Heart left ventricle (tissue), 16 donors: ENCODE measurements at regions of chr9 and their contacts with region 1.

Region 1: DNA sequence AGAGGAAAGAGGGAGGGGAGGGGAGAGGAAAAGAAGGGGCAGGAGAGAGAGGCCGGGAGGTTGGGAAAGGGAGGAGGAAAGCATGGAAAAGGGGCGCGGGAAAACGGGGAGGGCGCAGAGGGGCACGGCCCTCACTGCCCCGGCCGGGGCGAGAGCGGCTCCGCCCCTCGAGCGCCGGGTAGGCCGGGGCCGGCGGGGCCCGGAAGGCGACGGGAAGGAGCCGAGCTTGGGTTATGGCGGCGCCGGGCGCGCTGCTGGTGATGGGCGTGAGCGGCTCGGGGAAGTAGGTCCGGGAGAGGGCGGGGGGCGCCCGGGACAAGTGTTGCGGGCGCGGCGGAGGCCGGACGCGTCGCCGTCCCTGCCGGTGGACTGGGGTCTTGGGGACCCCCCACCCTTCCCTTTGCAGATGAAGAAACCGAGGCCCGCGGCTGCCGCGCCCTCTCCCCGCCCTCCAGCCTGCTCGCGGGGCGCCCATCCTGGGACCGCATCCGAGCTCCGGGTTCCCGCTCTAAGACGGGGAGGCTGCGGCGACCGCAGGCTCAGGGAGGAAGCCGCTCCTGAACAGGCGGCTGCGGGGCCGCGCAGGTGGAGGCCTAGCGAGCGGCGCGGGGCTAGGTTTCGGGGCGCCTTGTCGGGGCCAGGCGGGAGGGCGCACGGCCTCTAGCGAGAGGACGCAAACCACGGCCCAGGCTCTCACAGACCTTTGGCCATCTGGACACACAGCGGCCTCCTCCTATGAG is at the start of gene IDNK:
- DNase-seq: peak; percentile 68 to 82 (median 72)
- ATAC-seq: peak; percentile 63 to 95 (median 91)
- H3K4me3 ChIP-seq: peak within 1 kb of the TSS; percentile 53 to 98 (median 84)
- H3K27ac ChIP-seq: peak within 1 kb of the TSS; percentile 75 to 95 (median 90)
- H3K4me1 ChIP-seq: peaks cover 0 to 17% (median 7%) of the 10 kb centered on the region in 12 donors
- H3K27me3 ChIP-seq: peaks cover 0 to 4% (median 0%) of the 10 kb centered on the region in 9 donors
- CTCF ChIP-seq: no peak
- POLR2A ChIP-seq: peak in 1 of 2 donors; percentile 45
- total RNA-seq, gene IDNK: 0.69 to 6.9 (median 5.0) TPM

Region 2: GRCh38 chr9:83403527-83404238 is 219.4 kb before region 1 on chr9:
- intact Hi-C with region 1: no loop called
- DNase-seq: no peak
- ATAC-seq: peak in 3 of 4 donors; percentile 20 to 38 (median 36)
- H3K4me3 ChIP-seq: no peak overlapping the region
- H3K27ac ChIP-seq: no peak overlapping the region
- H3K4me1 ChIP-seq: peaks cover 0 to 17% (median 4%) of the 10 kb centered on the region in 12 donors
- H3K27me3 ChIP-seq: no peaks in the 10 kb centered on the region
- CTCF ChIP-seq: no peak
- POLR2A ChIP-seq: no peak

Region 3: DNA sequence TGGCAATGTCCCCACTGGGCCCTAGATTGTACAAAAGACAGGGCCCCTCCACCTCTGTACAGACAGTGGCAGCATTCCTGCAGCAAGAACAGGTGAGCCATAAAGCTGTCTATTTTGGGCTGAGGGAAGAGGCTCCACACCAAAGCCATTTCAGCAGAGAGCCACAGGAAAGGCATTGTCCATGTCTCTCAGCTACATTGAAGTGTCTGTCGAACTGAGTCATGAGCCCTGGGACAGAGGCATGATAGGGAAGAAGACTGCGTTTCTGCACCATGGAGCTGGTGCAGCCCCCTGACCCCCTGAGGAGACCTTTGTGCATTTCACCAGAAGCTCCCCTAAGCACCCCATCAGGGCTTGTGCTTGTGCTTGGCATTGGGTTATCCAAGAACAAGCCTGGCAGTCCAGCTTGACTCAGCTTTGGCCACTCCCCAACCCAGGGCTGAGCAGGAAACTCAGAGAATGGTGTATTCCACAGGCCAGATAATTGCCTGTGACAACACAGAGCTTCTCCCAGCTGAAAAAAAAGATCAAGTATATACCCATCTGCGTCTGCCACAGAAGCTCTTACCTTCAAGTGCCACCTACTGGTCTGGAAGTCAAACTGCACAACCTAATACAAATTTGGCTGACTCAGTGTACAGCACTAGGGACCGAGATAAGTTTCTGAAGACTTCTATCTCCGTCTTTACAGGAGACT is 79.0 kb before region 1 on chr9:
- intact Hi-C with region 1: no loop called
- DNase-seq: peak in 3 of 5 donors; percentile 35 to 50 (median 43)
- ATAC-seq: peak; percentile 73 to 92 (median 92)
- H3K4me3 ChIP-seq: no peak overlapping the region
- H3K27ac ChIP-seq: peak overlapping the region in 1 of 12 donors; percentile 21
- H3K4me1 ChIP-seq: peaks cover 0 to 12% (median 3%) of the 10 kb centered on the region in 12 donors
- H3K27me3 ChIP-seq: no peaks in the 10 kb centered on the region
- CTCF ChIP-seq: peak; percentile 64 to 86 (median 77)
- POLR2A ChIP-seq: no peak

Region 4: DNA sequence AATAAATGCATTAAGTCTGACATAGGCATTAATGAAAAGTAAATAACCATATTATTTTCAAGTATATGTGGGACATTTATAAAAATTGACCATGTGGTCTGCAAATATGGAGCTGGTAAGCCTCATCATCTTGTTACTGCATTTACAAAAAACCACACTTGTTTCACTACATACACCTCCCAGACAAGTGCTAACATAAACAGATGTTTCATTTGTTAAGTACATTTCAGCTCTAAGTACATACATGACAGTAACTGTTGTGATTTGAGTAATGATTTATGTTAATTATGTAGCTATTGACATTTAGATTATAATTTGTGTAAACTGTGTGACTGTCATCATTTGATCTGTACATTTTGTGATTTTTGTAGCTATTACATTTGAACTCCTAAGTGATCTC is 13.7 kb after region 1 on chr9:
- intact Hi-C with region 1: no loop called
- DNase-seq: no peak
- ATAC-seq: no peak
- H3K4me3 ChIP-seq: no peak overlapping the region
- H3K27ac ChIP-seq: no peak overlapping the region
- H3K4me1 ChIP-seq: peaks cover 0 to 4% (median 0%) of the 10 kb centered on the region in 12 donors
- H3K27me3 ChIP-seq: no peaks in the 10 kb centered on the region
- CTCF ChIP-seq: no peak
- POLR2A ChIP-seq: no peak

Region 5: DNA sequence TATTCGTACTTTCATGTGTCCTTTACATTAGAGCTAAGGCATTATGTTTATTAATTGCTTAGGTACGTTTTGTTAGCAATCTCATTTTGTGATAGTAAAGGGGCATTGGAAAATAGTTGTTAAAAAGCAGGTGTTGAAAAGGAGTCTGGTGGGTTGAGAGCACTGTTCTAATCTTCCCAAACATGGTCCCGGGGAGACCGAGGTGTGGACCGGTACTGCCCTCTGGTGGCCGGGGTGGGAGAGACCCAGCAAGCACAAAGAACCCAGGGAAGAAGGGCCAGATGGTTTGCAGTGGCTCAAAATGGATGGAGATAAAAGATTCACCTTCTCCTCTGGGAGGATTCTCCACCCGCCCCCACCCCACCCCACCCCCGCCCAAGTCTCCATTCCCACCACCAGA is 26.0 kb after region 1 on chr9:
- intact Hi-C with region 1: loop called in 2 of 10 experiments (anchors 1 to 2 kb)
- DNase-seq: peak; percentile 60 to 83 (median 61)
- ATAC-seq: peak; percentile 58 to 81 (median 76)
- H3K4me3 ChIP-seq: no peak overlapping the region
- H3K27ac ChIP-seq: peak overlapping the region in 2 of 12 donors; percentile 15 to 34
- H3K4me1 ChIP-seq: peaks cover 0 to 15% (median 1%) of the 10 kb centered on the region in 12 donors
- H3K27me3 ChIP-seq: no peaks in the 10 kb centered on the region
- CTCF ChIP-seq: peak; percentile 60 to 77 (median 71)
- POLR2A ChIP-seq: no peak

Region 6: DNA sequence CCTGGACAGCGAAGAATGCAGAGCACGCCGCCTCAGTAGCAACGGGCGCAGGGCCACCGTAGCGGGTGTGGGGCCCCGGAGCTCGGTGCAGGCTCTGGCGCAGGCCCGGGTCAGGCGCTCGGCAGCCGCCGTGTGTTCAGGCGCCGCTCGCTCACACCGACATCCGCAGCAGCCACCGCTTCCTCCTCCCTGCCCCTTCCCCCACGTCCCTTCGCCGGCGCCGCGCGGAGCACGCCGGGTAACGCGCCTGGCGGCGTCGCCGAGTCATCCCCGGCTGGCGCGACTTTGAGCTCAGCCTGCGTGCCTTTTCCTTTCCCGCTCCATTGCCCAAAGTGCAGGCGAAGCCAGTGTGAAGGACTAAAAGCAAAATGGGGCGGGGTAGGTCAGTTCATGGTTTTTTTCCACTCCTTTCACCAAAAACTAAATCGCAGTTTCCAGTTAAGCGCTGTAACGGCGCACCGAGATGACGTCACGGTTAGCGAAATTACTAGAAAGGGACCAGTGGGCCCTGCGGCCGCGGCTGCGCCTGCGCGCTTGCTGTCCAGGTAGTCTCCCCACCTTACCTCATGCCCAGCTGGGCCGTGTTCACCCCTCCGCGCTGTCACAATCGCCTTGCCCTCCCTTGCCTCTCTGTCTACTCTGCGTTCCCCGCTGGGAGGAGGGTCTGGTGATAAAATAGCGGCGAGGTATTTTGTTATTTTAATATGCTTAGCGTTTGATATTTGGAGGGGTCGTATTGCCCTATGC is 84.8 kb after region 1 on chr9 and contains the start of gene UBQLN1:
- intact Hi-C with region 1: loop called in 6 of 10 experiments (anchors 2 to 10 kb)
- DNase-seq: peak; percentile 95 to 97 (median 96)
- ATAC-seq: peak; percentile 96 to 98 (median 96)
- H3K4me3 ChIP-seq: peak within 1 kb of the TSS; percentile 64 to 99 (median 86)
- H3K27ac ChIP-seq: peak within 1 kb of the TSS; percentile 92 to 100 (median 98)
- H3K4me1 ChIP-seq: peaks cover 0 to 48% (median 25%) of the 10 kb centered on the region in 12 donors
- H3K27me3 ChIP-seq: no peaks in the 10 kb centered on the region
- CTCF ChIP-seq: peak in 1 of 12 donors; percentile 3
- POLR2A ChIP-seq: peak; percentile 43 to 86
- total RNA-seq, gene UBQLN1: 88.9 to 144 (median 103) TPM

Region 7: DNA sequence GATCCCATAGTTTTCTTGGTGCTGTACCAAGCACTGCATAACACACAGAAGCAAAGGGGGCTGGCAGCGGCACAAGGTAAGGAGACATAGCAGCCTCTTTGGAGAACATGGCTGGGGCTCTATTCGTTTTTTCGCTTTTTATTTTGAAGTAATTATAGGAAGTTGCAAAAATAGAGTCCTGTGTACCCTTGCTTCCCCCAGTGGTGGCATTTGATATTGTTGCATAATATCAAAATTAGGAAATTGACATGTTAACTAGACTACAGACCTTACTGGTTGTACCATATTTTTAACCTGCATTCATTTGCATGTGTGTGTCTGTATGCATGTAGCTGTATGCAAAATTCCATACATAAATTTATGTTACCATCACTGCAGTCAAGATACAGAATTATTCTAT is 91.2 kb after region 1 on chr9:
- intact Hi-C with region 1: loop called in 5 of 10 experiments (anchors 2 to 10 kb)
- DNase-seq: no peak
- ATAC-seq: no peak
- H3K4me3 ChIP-seq: no peak overlapping the region
- H3K27ac ChIP-seq: no peak overlapping the region
- H3K4me1 ChIP-seq: no peaks in the 10 kb centered on the region
- H3K27me3 ChIP-seq: no peaks in the 10 kb centered on the region
- CTCF ChIP-seq: peak in 5 of 12 donors; percentile 8 to 25 (median 21)
- POLR2A ChIP-seq: no peak

Region 8: DNA sequence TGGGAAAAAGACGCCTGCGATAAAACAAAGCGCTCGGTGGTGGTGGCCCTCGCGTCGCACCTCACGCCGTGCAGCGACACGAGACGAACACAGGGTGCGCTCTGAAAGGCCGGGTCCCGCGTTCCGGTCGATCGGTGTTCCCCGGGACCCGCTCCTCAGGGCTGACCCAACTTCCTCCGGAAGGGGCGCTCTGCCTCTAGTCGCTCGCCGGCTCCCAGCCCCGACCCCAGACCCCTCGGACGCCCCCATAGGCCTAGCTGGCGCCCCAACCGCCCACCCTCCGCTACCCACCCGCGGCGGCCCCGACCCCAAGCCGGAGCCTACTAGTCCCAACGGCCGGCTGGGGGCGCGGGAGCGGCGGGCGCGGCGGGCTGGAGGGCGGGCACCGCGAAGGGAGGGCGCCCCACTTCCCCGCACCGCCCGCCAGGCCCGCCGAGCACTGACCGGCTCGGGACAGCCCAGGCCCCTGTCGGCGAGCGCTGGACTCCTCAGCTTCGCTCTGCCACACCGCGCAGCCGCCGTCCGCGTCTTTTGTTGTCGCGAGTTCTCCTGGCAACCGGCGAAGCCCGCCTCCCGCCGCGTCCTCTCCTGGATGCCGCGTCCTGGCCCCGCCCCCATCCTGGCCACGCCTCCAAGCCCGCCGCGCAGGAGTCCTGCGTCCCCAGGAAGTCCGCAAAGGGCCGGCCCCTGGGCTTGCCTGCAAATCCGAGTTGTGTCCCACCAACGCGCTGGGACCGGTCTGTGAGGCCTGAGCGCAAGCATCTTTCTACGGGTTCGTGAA is 298.0 kb after region 1 on chr9 and contains the start of gene KIF27:
- intact Hi-C with region 1: loop called in 2 of 10 experiments (anchors 5 to 10 kb)
- DNase-seq: peak; percentile 99 to 100 (median 99)
- ATAC-seq: peak; percentile 98 to 99 (median 99)
- H3K4me3 ChIP-seq: peak within 1 kb of the TSS; percentile 65 to 96 (median 76)
- H3K27ac ChIP-seq: peak within 1 kb of the TSS; percentile 66 to 98 (median 92)
- H3K4me1 ChIP-seq: peaks cover 0 to 12% (median 5%) of the 10 kb centered on the region in 12 donors
- H3K27me3 ChIP-seq: no peaks in the 10 kb centered on the region
- CTCF ChIP-seq: peak in 11 of 12 donors; percentile 21 to 56 (median 37)
- POLR2A ChIP-seq: peak; percentile 26 to 89
- total RNA-seq, gene KIF27: 2.5 to 4.2 (median 3.2) TPM